Mammary epithelial cell (primary cell): ENCODE measurements at regions of chr20 and their contacts with region 1.

Region 1: GRCh38 chr20:60283281-60283680 is 325.1 kb downstream of the CDH26 start:
- DNase-seq: no peak
- H3K4me3 ChIP-seq: no peak overlapping the region
- H3K27ac ChIP-seq: no peak overlapping the region
- H3K4me1 ChIP-seq: no peaks in the 10 kb centered on the region
- H3K27me3 ChIP-seq: no peaks in the 10 kb centered on the region
- CTCF ChIP-seq: no peak

Region 2: GRCh38 chr20:60240423-60240822 is 42.9 kb before region 1 on chr20:
- CTCF ChIA-PET with region 1: no interaction called
- dilution Hi-C with region 1: no loop called
- in situ Hi-C with region 1: no loop called
- intact Hi-C with region 1: no loop called
- DNase-seq: no peak
- H3K4me3 ChIP-seq: no peak overlapping the region
- H3K27ac ChIP-seq: no peak overlapping the region
- H3K4me1 ChIP-seq: peaks cover 10% of the 10 kb centered on the region
- H3K27me3 ChIP-seq: no peaks in the 10 kb centered on the region
- CTCF ChIP-seq: no peak

Region 3: DNA sequence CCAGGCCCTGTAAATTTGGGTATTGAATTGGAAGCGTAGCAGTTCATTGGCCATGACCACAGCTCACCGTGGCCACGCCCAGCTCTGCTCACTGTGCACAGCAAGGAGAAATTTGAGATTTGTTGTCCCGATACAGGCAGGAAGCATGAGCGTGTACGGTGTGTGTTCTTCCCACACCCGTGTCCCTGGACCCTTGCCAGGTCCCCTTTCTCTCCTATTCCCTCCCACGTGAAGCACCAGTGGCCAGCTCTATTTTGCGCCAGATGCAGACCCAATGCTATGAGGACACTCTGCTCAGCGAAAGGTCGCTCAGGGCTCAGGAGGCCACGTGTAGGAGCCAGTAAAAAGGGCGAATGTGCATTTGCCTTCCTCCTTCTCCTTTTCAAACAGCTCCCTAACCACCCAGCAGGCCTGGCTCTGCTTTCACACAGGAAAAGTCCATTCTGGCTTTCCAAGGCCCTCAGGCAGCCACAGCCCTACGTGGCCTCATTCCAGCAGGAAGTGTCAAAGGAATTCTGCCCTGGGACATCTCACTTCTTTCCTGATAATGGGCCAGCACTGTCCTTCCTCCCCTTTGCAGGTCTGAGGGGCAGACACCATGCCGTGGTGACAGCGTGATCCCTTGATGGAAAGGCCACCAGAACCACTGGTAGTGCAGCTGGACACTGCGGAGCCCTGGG is 469.6 kb after region 1 on chr20:
- CTCF ChIA-PET with region 1: interaction called, 10 read pairs
- dilution Hi-C with region 1: no loop called
- in situ Hi-C with region 1: no loop called
- intact Hi-C with region 1: no loop called
- DNase-seq: no peak
- H3K4me3 ChIP-seq: no peak overlapping the region
- H3K27ac ChIP-seq: no peak overlapping the region
- H3K4me1 ChIP-seq: peaks cover 5% of the 10 kb centered on the region
- H3K27me3 ChIP-seq: peaks cover 2% of the 10 kb centered on the region
- CTCF ChIP-seq: no peak